ENCODE measurements at regions of chr15 and their contacts with region 1.

Region 1: GRCh38 chr15:96356494-96357455 is 26.3 kb downstream of the NR2F2 start:
- DNase-seq: peak; percentile 82 to 85
- ATAC-seq: peak; percentile 50 to 71 (median 66)
- H3K4me3 ChIP-seq: peak overlapping the region; percentile 37 to 95 (median 68)
- H3K27ac ChIP-seq: peak overlapping the region in 9 of 10 donors; percentile 49 to 89 (median 70)
- H3K4me1 ChIP-seq: peaks cover 0 to 75% (median 41%) of the 10 kb centered on the region in 9 donors
- H3K27me3 ChIP-seq: peaks cover 0 to 98% (median 82%) of the 10 kb centered on the region in 7 donors
- CTCF ChIP-seq: peak; percentile 95 to 99 (median 98)

Region 2: DNA sequence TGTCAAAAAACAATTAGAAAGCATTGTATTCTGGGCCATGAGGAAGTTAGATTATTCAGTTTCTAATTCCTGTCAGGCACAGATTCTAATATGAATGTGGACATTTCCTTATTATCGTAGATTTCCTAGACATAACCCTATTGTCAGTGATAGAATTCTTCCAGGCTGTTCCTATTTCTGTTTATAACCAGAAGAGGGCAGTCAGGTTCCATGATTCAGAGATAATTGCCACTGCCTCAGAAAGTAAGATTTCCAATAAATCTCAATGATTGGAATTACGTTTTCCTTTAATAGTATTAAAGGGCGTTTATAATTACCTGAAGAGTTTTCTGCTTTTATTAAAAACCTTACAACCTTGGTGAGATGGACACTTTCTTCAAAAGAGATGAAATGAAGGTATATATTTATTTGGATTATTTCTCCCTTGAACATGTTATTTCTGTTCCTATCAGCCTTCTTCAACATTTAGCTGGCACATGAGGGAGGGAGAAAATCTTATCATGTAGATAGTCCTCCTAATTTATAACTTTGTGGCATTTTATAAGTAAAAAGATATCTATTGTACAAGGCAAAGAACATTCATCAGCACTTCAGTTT is 1686.2 kb before region 1 on chr15:
- intact Hi-C with region 1: loop called in 1 of 10 experiments (anchors 10 kb)
- DNase-seq: peak in 1 of 2 donors; percentile 13
- ATAC-seq: peak in 5 of 8 donors; percentile 41 to 63 (median 54)
- H3K4me3 ChIP-seq: no peak overlapping the region
- H3K27ac ChIP-seq: peak overlapping the region in 4 of 10 donors; percentile 5 to 70 (median 29)
- H3K4me1 ChIP-seq: peaks cover 0 to 20% (median 8%) of the 10 kb centered on the region in 9 donors
- H3K27me3 ChIP-seq: peaks cover 0 to 5% (median 0%) of the 10 kb centered on the region in 7 donors
- CTCF ChIP-seq: peak; percentile 54 to 86 (median 76)

Region 3: GRCh38 chr15:96585484-96586386 is 229.0 kb after region 1 on chr15:
- intact Hi-C with region 1: loop called in 8 of 10 experiments (anchors 5 to 10 kb)
- DNase-seq: no peak
- ATAC-seq: no peak
- H3K4me3 ChIP-seq: no peak overlapping the region
- H3K27ac ChIP-seq: no peak overlapping the region
- H3K4me1 ChIP-seq: peaks cover 0 to 15% (median 0%) of the 10 kb centered on the region in 9 donors
- H3K27me3 ChIP-seq: peaks cover 0 to 21% (median 6%) of the 10 kb centered on the region in 7 donors
- CTCF ChIP-seq: peak in 6 of 9 donors; percentile 13 to 46 (median 39)

Region 4: GRCh38 chr15:96893159-96893906 is 536.6 kb after region 1 on chr15:
- intact Hi-C with region 1: loop called in 4 of 10 experiments (anchors 5 to 10 kb)
- DNase-seq: no peak
- ATAC-seq: no peak
- H3K4me3 ChIP-seq: no peak overlapping the region
- H3K27ac ChIP-seq: no peak overlapping the region
- H3K4me1 ChIP-seq: peaks cover 0 to 10% (median 0%) of the 10 kb centered on the region in 9 donors
- H3K27me3 ChIP-seq: peaks cover 0 to 9% (median 0%) of the 10 kb centered on the region in 7 donors
- CTCF ChIP-seq: peak in 8 of 9 donors; percentile 8 to 66 (median 52)

Region 5: DNA sequence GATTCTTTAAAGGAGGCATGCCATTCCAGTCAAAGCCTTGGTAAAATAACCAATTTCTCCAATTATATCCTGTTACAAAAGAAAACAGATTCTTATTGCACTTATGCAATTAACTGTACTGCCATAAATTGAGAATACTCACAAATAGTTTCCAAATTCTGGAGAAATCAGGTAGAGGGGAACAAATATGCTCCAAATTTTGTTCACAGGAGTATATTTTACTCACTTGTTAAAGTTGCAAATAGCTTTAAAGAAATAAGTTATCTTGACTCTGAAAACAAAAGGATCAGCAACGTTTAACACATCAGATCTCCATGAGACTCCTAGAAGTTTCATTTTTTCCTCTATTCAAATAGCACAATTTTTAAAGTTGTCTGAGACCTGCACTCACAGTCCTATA is 891.6 kb after region 1 on chr15:
- intact Hi-C with region 1: loop called in 1 of 10 experiments (anchors 10 kb)
- DNase-seq: no peak
- ATAC-seq: no peak
- H3K4me3 ChIP-seq: no peak overlapping the region
- H3K27ac ChIP-seq: no peak overlapping the region
- H3K4me1 ChIP-seq: no peaks in the 10 kb centered on the region
- H3K27me3 ChIP-seq: no peaks in the 10 kb centered on the region
- CTCF ChIP-seq: no peak

Region 6: GRCh38 chr15:97759363-97759762 is 1402.6 kb after region 1 on chr15:
- intact Hi-C with region 1: loop called in 7 of 10 experiments (anchors 5 to 10 kb)
- DNase-seq: no peak
- ATAC-seq: no peak
- H3K4me3 ChIP-seq: no peak overlapping the region
- H3K27ac ChIP-seq: no peak overlapping the region
- H3K4me1 ChIP-seq: no peaks in the 10 kb centered on the region
- H3K27me3 ChIP-seq: peaks cover 0 to 27% (median 13%) of the 10 kb centered on the region in 7 donors
- CTCF ChIP-seq: no peak

Measured in heart right ventricle (tissue), 16 donors.